Caco-2 (cell line): ENCODE measurements at regions of chrX and their contacts with region 1.

Region 1: GRCh38 chrX:120468825-120469525 is at the start of gene LAMP2:
- DNase-seq: peak; percentile 89 to 90
- H3K4me3 ChIP-seq: peak within 1 kb of the TSS; percentile 67
- H3K4me3 Mint-ChIP-seq: peak within 1 kb of the TSS; percentile 95
- H3K27ac Mint-ChIP-seq: peak within 1 kb of the TSS; percentile 93
- H3K4me1 ChIP-seq: peaks cover 5% of the 10 kb centered on the region; the same call in 1 of the 2 replicates
- H3K4me1 Mint-ChIP-seq: no peaks in the 10 kb centered on the region
- H3K27me3 ChIP-seq: no peaks in the 10 kb centered on the region
- H3K27me3 Mint-ChIP-seq: peaks cover 1% of the 10 kb centered on the region
- CTCF ChIP-seq: no peak
- total RNA-seq, gene LAMP2: 101 and 119 TPM in 2 replicates

Region 2: DNA sequence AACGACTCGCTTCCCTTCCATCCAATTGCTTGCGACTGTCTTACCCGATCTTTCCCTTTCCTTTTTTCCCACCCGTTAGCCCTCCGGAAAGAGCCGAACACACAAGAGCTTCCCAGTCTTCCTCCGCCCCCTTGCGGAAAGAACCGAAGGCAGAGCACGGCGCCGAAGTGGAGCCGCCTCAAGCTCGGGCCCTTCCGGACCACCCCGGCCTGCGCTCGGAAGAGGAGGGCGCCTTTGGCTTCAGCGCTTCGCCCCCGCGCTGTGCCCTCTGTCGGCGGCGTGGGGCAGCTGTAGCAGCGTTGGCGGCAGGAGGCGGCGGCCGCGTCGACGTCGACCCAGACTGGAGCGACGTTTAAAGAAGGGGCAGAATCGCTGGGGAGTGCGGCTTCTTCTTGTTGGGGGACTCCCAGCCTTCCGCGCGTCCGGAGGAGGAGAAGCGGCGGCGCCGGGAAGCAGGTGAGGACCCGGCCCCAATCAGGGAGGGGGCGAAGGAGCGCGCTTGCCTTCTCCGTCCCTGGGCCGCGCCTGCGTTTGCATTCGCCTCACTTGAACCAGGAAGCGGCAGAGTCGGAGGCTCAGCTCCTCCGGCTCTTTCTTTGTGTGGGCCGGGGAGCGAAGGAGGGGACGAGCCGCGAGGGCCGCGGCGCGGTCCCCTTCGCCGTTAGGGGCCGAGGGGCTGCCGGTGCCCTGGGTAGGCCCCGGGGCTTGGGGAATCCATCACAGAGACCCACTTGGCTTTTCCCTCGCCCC is 218.3 kb before region 1 on chrX and contains the start of gene ZBTB33:
- CTCF ChIA-PET with region 1: no interaction called
- POLR2A ChIA-PET with region 1: no interaction called
- intact Hi-C with region 1: loop called (anchors 5 kb)
- DNase-seq: peak; percentile 89 to 91
- H3K4me3 ChIP-seq: peak within 1 kb of the TSS; percentile 71
- H3K4me3 Mint-ChIP-seq: peak within 1 kb of the TSS; percentile 97
- H3K27ac Mint-ChIP-seq: peak within 1 kb of the TSS; percentile 99
- H3K4me1 ChIP-seq: no peaks in the 10 kb centered on the region
- H3K4me1 Mint-ChIP-seq: no peaks in the 10 kb centered on the region
- H3K27me3 ChIP-seq: no peaks in the 10 kb centered on the region
- H3K27me3 Mint-ChIP-seq: no peaks in the 10 kb centered on the region
- CTCF ChIP-seq: peak in 1 of 2 experiments; percentile 74
- total RNA-seq, gene ZBTB33: 16.5 and 17.2 TPM in 2 replicates

Region 3: DNA sequence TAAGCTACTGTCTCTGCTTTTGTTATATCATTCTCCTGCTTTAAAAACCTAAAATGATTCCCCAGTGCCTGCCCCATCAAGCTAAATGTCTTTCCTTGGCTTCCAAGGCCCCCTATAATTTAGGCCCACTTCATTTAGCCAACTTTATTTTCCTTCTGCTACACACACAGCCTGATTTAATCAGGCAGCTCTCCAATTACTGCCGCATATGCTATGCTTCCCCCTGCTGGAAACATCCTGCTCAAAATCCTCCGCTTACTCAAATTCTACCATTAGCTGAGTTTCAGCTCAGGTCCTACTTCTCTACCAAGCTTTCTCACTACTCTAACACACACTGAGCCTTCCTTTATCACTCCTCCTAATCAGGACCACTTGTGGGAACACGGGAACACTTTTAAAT is 16.8 kb before region 1 on chrX:
- CTCF ChIA-PET with region 1: interaction called, 3 read pairs
- POLR2A ChIA-PET with region 1: interaction called, 3 read pairs
- intact Hi-C with region 1: loop called (anchors 1 kb)
- DNase-seq: peak in 1 of 2 experiments; percentile 6
- H3K4me3 ChIP-seq: no peak overlapping the region
- H3K4me3 Mint-ChIP-seq: no peak overlapping the region
- H3K27ac Mint-ChIP-seq: no peak overlapping the region
- H3K4me1 ChIP-seq: no peaks in the 10 kb centered on the region
- H3K4me1 Mint-ChIP-seq: no peaks in the 10 kb centered on the region
- H3K27me3 ChIP-seq: no peaks in the 10 kb centered on the region
- H3K27me3 Mint-ChIP-seq: no peaks in the 10 kb centered on the region
- CTCF ChIP-seq: peak in 1 of 2 experiments; percentile 37

Region 4: GRCh38 chrX:120485638-120486520 is 16.9 kb after region 1 on chrX:
- CTCF ChIA-PET with region 1: interaction called, 6 read pairs
- POLR2A ChIA-PET with region 1: interaction called, 13 read pairs
- intact Hi-C with region 1: loop called (anchors 1 kb)
- DNase-seq: peak; percentile 77 to 78
- H3K4me3 ChIP-seq: peak overlapping the region; percentile 29
- H3K4me3 Mint-ChIP-seq: peak overlapping the region; percentile 65
- H3K27ac Mint-ChIP-seq: peak overlapping the region; percentile 70
- H3K4me1 ChIP-seq: no peaks in the 10 kb centered on the region; the same call in 1 of the 2 replicates
- H3K4me1 Mint-ChIP-seq: no peaks in the 10 kb centered on the region
- H3K27me3 ChIP-seq: no peaks in the 10 kb centered on the region
- H3K27me3 Mint-ChIP-seq: no peaks in the 10 kb centered on the region
- CTCF ChIP-seq: peak; percentile 11 to 40

Region 5: DNA sequence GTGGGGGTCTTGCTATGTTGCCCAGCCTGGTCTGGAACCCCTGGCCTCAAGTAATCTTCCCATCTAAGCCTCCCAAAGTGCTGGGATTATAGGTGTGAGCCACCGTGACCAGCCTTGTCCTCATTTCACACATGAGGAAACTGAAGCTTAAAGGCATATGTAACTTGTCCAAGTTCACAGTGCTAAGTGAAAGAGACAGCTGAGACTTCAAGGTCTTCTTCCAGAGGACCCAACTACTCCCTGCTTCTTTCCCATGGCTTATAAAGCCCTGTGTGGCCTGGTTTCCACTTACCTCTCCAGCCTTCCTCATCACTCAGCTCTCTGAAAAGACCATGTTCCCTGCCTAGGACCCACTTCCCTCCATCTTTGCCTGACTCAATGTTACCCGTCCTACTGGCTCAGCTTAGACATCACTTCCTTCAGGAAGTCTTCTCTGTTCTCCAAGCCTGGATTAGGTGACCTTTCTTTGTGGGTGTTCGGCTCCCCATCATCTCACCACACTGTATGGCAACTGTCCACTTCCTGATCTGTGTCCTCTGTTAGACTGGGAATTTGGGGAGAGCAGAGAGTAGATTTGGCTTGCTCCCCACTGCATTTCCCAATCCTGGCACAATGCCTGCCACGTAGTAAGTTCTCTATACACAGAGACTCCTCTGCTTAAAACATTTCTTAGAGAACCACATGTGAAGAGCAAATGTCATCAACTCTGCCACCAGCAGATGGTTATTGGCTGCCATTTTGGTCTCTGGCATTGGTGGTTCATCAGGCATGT is 30.5 kb after region 1 on chrX:
- CTCF ChIA-PET with region 1: no interaction called
- POLR2A ChIA-PET with region 1: no interaction called
- intact Hi-C with region 1: no loop called
- DNase-seq: no peak
- H3K4me3 ChIP-seq: no peak overlapping the region
- H3K4me3 Mint-ChIP-seq: no peak overlapping the region
- H3K27ac Mint-ChIP-seq: no peak overlapping the region
- H3K4me1 ChIP-seq: no peaks in the 10 kb centered on the region
- H3K4me1 Mint-ChIP-seq: peaks cover 7% of the 10 kb centered on the region
- H3K27me3 ChIP-seq: no peaks in the 10 kb centered on the region
- H3K27me3 Mint-ChIP-seq: no peaks in the 10 kb centered on the region
- CTCF ChIP-seq: no peak